ENCODE measurements at regions of chr17 and their contacts with region 1.

Region 1: DNA sequence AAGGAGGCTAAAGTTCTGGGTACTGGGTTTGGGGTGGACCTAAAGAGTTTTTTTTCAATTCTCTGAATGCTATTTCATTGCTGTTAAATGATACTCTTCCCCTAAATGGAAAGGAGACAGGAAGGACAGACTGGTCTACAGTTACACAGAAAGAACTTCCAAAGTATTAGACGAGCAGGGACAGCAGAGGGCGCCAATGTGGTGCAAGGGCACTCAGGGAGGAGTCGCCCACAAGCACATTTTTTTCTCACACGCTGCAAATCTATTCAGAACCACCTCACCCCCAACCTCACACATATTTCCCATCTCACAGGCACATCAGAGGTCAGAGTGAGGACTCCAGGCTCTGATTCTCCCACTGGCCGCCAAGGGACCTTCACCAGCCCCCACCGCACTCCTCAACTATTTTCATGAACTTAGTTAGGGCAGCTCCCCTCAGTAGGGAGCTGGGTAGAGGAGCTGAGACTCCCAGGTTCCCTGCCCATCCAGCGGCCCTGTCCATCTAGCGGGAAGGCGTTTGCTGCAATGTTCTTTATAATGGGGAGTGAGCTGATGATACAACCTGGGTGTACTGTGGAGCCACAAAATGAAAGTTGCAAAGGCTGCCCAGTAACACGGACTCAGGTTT is 6.8 kb upstream of the CA4 start:
- DNase-seq: peak; percentile 95
- H3K4me3 Mint-ChIP-seq: peak overlapping the region; percentile 23
- H3K27ac Mint-ChIP-seq: no peak overlapping the region
- H3K4me1 Mint-ChIP-seq: peaks cover 26% of the 10 kb centered on the region
- H3K27me3 Mint-ChIP-seq: peaks cover 93% of the 10 kb centered on the region

Region 2: GRCh38 chr17:60154616-60155426 is 11.8 kb after region 1 on chr17:
- intact Hi-C with region 1: no loop called
- DNase-seq: no peak
- H3K4me3 Mint-ChIP-seq: no peak overlapping the region
- H3K27ac Mint-ChIP-seq: no peak overlapping the region
- H3K4me1 Mint-ChIP-seq: peaks cover 11% of the 10 kb centered on the region
- H3K27me3 Mint-ChIP-seq: peaks cover 36% of the 10 kb centered on the region

Region 3: GRCh38 chr17:60421273-60421934 is 278.4 kb after region 1 on chr17:
- intact Hi-C with region 1: loop called (anchors 5 kb)
- DNase-seq: peak; percentile 91
- H3K4me3 Mint-ChIP-seq: peak overlapping the region; percentile 84
- H3K27ac Mint-ChIP-seq: peak overlapping the region; percentile 82
- H3K4me1 Mint-ChIP-seq: peaks cover 6% of the 10 kb centered on the region
- H3K27me3 Mint-ChIP-seq: peaks cover 8% of the 10 kb centered on the region